ENCODE measurements at regions of chr3 and their contacts with region 1.

Region 1: GRCh38 chr3:72009851-72010443 is 225.0 kb upstream of the PROK2 start:
- DNase-seq: no peak
- ATAC-seq: peak; percentile 60
- H3K4me3 ChIP-seq: no peak overlapping the region
- H3K4me3 Mint-ChIP-seq: no peak overlapping the region
- H3K27ac ChIP-seq: no peak overlapping the region
- H3K27ac Mint-ChIP-seq: no peak overlapping the region
- H3K4me1 ChIP-seq: no peaks in the 10 kb centered on the region
- H3K4me1 Mint-ChIP-seq: peaks cover 0 to 12% (median 0%) of the 10 kb centered on the region in 7 donors
- H3K27me3 ChIP-seq: no peaks in the 10 kb centered on the region
- H3K27me3 Mint-ChIP-seq: peaks cover 0 to 10% (median 0%) of the 10 kb centered on the region in 5 donors

Region 2: GRCh38 chr3:72100601-72101187 is 90.7 kb after region 1 on chr3:
- CTCF ChIA-PET with region 1: no interaction called
- POLR2A ChIA-PET with region 1: no interaction called
- intact Hi-C with region 1: no loop called
- DNase-seq: peak; percentile 83 to 94 (median 90)
- ATAC-seq: peak; percentile 89
- H3K4me3 ChIP-seq: peak overlapping the region; percentile 56
- H3K4me3 Mint-ChIP-seq: peak overlapping the region; percentile 77 to 88 (median 83)
- H3K27ac ChIP-seq: peak overlapping the region; percentile 37
- H3K27ac Mint-ChIP-seq: peak overlapping the region; percentile 28 to 96 (median 83)
- H3K4me1 ChIP-seq: peaks cover 3 to 19% of the 10 kb centered on the region in 2 donors
- H3K4me1 Mint-ChIP-seq: peaks cover 24 to 38% (median 26%) of the 10 kb centered on the region in 7 donors
- H3K27me3 ChIP-seq: peaks cover 0 to 3% of the 10 kb centered on the region in 2 donors
- H3K27me3 Mint-ChIP-seq: peaks cover 0 to 7% (median 0%) of the 10 kb centered on the region in 5 donors

Region 3: GRCh38 chr3:72177083-72178050 is 167.4 kb after region 1 on chr3:
- CTCF ChIA-PET with region 1: no interaction called
- POLR2A ChIA-PET with region 1: interaction called, 3 read pairs
- intact Hi-C with region 1: loop called in 1 of 2 experiments (anchors 10 kb)
- DNase-seq: peak in 4 of 9 donors; percentile 9 to 25 (median 11)
- ATAC-seq: peak; percentile 37
- H3K4me3 ChIP-seq: no peak overlapping the region
- H3K4me3 Mint-ChIP-seq: peak overlapping the region; percentile 33 to 82 (median 63)
- H3K27ac ChIP-seq: no peak overlapping the region
- H3K27ac Mint-ChIP-seq: peak overlapping the region in 1 of 9 donors; percentile 16
- H3K4me1 ChIP-seq: peaks cover 0 to 9% of the 10 kb centered on the region in 2 donors
- H3K4me1 Mint-ChIP-seq: peaks cover 5 to 20% (median 10%) of the 10 kb centered on the region in 7 donors
- H3K27me3 ChIP-seq: no peaks in the 10 kb centered on the region
- H3K27me3 Mint-ChIP-seq: peaks cover 24 to 47% (median 33%) of the 10 kb centered on the region in 5 donors